ENCODE measurements at regions of chr3 and their contacts with region 1.

Region 1: DNA sequence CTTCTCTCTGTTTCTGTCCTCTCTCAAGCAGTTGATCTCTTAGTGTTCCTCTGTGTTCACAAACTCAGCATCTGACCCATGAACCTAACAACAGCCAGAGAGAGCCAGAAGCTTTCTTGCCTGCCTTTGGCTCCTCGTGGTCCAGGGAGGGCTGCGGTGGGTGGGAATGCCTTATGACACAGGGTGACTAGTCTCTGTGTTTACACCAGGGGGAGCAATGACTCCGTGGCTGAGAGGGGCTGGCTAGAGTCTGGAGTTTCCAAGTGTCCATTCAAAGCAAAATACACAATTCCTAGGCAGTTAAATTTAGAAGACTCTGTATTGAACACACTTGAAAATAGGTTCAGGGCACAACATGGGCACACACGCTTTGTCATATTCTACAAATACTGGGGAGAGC is 370.0 kb upstream of the FRG2C start:
- DNase-seq: peak; percentile 24 to 36
- H3K4me3 ChIP-seq: no peak overlapping the region
- H3K4me3 Mint-ChIP-seq: no peak overlapping the region
- H3K27ac Mint-ChIP-seq: no peak overlapping the region
- H3K4me1 ChIP-seq: no peaks in the 10 kb centered on the region
- H3K4me1 Mint-ChIP-seq: no peaks in the 10 kb centered on the region
- H3K27me3 ChIP-seq: no peaks in the 10 kb centered on the region
- H3K27me3 Mint-ChIP-seq: peaks cover 2% of the 10 kb centered on the region
- CTCF ChIP-seq: peak; percentile 48 to 56

Region 2: DNA sequence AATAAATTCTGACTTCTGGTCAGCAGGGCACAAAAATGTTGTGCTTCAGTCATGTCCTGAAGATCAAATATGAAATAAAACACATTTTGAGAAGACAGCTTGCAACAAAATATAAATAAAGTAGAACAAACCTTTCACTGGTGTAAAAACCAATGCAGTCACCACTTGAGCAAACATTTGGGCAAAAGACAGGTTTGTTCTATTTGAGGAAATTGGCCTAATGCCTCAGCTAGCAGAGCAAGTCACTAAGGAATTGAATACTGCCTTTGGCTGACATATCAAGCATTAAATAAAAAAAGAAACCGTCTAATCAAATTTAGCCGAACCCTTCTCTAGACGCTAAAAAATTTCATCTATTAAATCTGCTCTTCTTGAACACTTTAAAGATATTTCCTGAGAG is 204.3 kb before region 1 on chr3:
- CTCF ChIA-PET with region 1: no interaction called
- POLR2A ChIA-PET with region 1: no interaction called
- intact Hi-C with region 1: no loop called
- DNase-seq: no peak
- H3K4me3 ChIP-seq: no peak overlapping the region
- H3K4me3 Mint-ChIP-seq: no peak overlapping the region
- H3K27ac Mint-ChIP-seq: no peak overlapping the region
- H3K4me1 ChIP-seq: no peaks in the 10 kb centered on the region
- H3K4me1 Mint-ChIP-seq: no peaks in the 10 kb centered on the region
- H3K27me3 ChIP-seq: no peaks in the 10 kb centered on the region
- H3K27me3 Mint-ChIP-seq: no peaks in the 10 kb centered on the region
- CTCF ChIP-seq: no peak

Region 3: GRCh38 chr3:75254685-75255084 is 39.4 kb before region 1 on chr3:
- CTCF ChIA-PET with region 1: no interaction called
- POLR2A ChIA-PET with region 1: no interaction called
- intact Hi-C with region 1: loop called (anchors 2 kb)
- DNase-seq: no peak
- H3K4me3 ChIP-seq: no peak overlapping the region
- H3K4me3 Mint-ChIP-seq: no peak overlapping the region
- H3K27ac Mint-ChIP-seq: no peak overlapping the region
- H3K4me1 ChIP-seq: no peaks in the 10 kb centered on the region
- H3K4me1 Mint-ChIP-seq: no peaks in the 10 kb centered on the region
- H3K27me3 ChIP-seq: no peaks in the 10 kb centered on the region
- H3K27me3 Mint-ChIP-seq: no peaks in the 10 kb centered on the region
- CTCF ChIP-seq: no peak

Region 4: GRCh38 chr3:75341324-75342071 is 47.4 kb after region 1 on chr3:
- CTCF ChIA-PET with region 1: no interaction called
- POLR2A ChIA-PET with region 1: no interaction called
- intact Hi-C with region 1: loop called (anchors 10 kb)
- DNase-seq: peak in 1 of 2 experiments; percentile 20
- H3K4me3 ChIP-seq: no peak overlapping the region
- H3K4me3 Mint-ChIP-seq: no peak overlapping the region
- H3K27ac Mint-ChIP-seq: no peak overlapping the region
- H3K4me1 ChIP-seq: no peaks in the 10 kb centered on the region
- H3K4me1 Mint-ChIP-seq: no peaks in the 10 kb centered on the region
- H3K27me3 ChIP-seq: no peaks in the 10 kb centered on the region
- H3K27me3 Mint-ChIP-seq: peaks cover 10% of the 10 kb centered on the region
- CTCF ChIP-seq: peak in 1 of 2 experiments; percentile 18

Measured in Caco-2 (cell line).